ENCODE measurements at regions of chr4 and their contacts with region 1.

Region 1: GRCh38 chr4:104302731-104303130 is 192.0 kb downstream of the CXXC4 start:
- DNase-seq: no peak
- ATAC-seq: no peak; the same call in 1 of the 2 replicates
- H3K4me3 Mint-ChIP-seq: no peak overlapping the region
- H3K27ac Mint-ChIP-seq: peak overlapping the region; percentile 73; the same call in 1 of the 2 replicates
- H3K4me1 Mint-ChIP-seq: peaks cover 5% of the 10 kb centered on the region; the same call in 1 of the 2 replicates
- H3K27me3 Mint-ChIP-seq: no peaks in the 10 kb centered on the region
- CTCF ChIP-seq: no peak

Region 2: DNA sequence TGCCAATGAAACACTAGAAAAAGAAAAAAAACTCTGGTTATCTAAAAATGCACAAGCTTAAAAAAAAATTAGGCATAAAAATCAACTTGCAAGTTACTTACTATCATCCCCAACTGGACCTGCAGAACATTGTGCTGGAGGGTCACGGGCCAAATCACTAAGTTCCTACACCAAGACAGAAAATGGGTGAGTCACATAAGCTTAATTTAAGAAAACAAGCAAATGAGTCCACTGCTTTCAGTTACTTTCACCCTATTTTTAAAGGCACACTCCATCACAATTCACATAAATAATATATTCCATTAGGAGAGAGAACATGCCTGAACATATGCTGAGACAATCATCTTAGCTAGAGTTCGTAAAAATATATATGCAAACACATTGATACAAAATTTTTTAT is 1493.0 kb before region 1 on chr4:
- CTCF ChIA-PET with region 1: no interaction called
- POLR2A ChIA-PET with region 1: interaction called, 10 read pairs
- DNase-seq: no peak
- ATAC-seq: no peak
- H3K4me3 Mint-ChIP-seq: no peak overlapping the region
- H3K27ac Mint-ChIP-seq: no peak overlapping the region
- H3K4me1 Mint-ChIP-seq: peaks cover 37% of the 10 kb centered on the region
- H3K27me3 Mint-ChIP-seq: no peaks in the 10 kb centered on the region
- CTCF ChIP-seq: no peak

Region 3: DNA sequence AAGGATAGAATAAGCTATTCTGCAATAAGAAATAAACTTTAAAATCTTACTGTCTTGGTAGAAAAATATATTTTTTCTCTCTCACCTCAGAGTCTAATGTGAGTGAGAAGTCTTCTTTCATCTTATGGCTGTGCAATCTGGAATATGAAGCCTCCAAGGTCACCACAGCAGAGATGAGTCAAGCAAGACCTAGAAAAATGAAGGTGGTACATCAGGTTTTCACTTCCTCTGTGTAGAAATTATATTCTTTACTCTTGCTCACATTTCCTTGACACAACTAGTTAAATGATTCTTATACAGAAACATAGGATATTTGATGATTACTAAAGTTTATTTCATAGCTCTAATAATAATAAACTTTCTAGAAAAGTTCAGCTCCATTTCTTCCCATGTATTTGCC is 19.4 kb before region 1 on chr4:
- CTCF ChIA-PET with region 1: no interaction called
- POLR2A ChIA-PET with region 1: no interaction called
- DNase-seq: no peak
- ATAC-seq: no peak
- H3K4me3 Mint-ChIP-seq: no peak overlapping the region
- H3K27ac Mint-ChIP-seq: no peak overlapping the region
- H3K4me1 Mint-ChIP-seq: no peaks in the 10 kb centered on the region
- H3K27me3 Mint-ChIP-seq: no peaks in the 10 kb centered on the region; the same call in 1 of the 2 replicates
- CTCF ChIP-seq: no peak

Region 4: DNA sequence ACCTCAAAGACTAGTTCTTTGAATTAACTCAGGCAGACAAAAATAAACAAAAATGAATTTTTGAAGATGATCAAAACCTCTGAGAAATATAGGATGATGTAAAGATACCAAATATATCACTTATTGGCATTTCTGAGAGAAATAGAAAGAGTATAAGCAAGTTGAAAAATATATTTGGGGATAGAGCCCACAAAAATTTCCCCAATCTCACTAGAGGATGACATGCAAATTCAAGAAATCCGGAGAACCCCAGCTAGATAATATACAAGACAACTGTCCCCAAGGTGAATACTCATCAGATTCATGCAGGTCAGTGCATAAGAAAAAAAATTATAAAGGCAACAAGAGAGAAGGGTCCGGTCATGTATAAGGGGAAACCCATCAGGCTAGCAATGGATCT is 62.9 kb after region 1 on chr4:
- CTCF ChIA-PET with region 1: no interaction called
- POLR2A ChIA-PET with region 1: no interaction called
- DNase-seq: no peak
- ATAC-seq: no peak
- H3K4me3 Mint-ChIP-seq: no peak overlapping the region
- H3K27ac Mint-ChIP-seq: no peak overlapping the region
- H3K4me1 Mint-ChIP-seq: no peaks in the 10 kb centered on the region
- H3K27me3 Mint-ChIP-seq: no peaks in the 10 kb centered on the region
- CTCF ChIP-seq: no peak